ENCODE measurements at regions of chr9 and their contacts with region 1.

Region 1: GRCh38 chr9:32550562-32551433 is 1.3 kb upstream of the SMIM27 start:
- DNase-seq: peak; percentile 95 to 97
- H3K4me3 ChIP-seq: peak overlapping the region; percentile 80 to 97 (median 87)
- H3K27ac ChIP-seq: peak overlapping the region; percentile 89
- H3K4me1 ChIP-seq: peaks cover 0 to 3% (median 0%) of the 10 kb centered on the region in 4 experiments; a peak in 2 of 7 replicates
- H3K27me3 ChIP-seq: no peaks in the 10 kb centered on the region
- CTCF ChIP-seq: peak in 1 of 3 experiments; percentile 13; a peak in 1 of 4 replicates
- EP300 ChIP-seq: peak in 1 of 2 experiments; percentile 9; a peak in 1 of 3 replicates
- POLR2A ChIP-seq: peak; percentile 49 to 86
- RAD21 ChIP-seq: no peak

Region 2: GRCh38 chr9:32344551-32345182 is 206.1 kb before region 1 on chr9:
- CTCF ChIA-PET with region 1: no interaction called
- POLR2A ChIA-PET with region 1: no interaction called
- DNase-seq: peak; percentile 43 to 72
- H3K4me3 ChIP-seq: peak overlapping the region in 3 of 4 experiments; percentile 17 to 44 (median 26); a peak in 5 of 8 replicates
- H3K27ac ChIP-seq: peak overlapping the region; percentile 78; the same call in 1 of the 2 replicates
- H3K4me1 ChIP-seq: peaks cover 9 to 25% (median 16%) of the 10 kb centered on the region in 4 experiments
- H3K27me3 ChIP-seq: no peaks in the 10 kb centered on the region
- CTCF ChIP-seq: no peak
- EP300 ChIP-seq: peak in 1 of 2 experiments; percentile 79; a peak in 1 of 3 replicates
- POLR2A ChIP-seq: peak in 1 of 2 experiments; percentile 79; a peak in 2 of 3 replicates
- RAD21 ChIP-seq: 0 out of 4 replicates have a peak, but pooled peaks of 1 of the 2 experiments have one; percentile 3

Region 3: DNA sequence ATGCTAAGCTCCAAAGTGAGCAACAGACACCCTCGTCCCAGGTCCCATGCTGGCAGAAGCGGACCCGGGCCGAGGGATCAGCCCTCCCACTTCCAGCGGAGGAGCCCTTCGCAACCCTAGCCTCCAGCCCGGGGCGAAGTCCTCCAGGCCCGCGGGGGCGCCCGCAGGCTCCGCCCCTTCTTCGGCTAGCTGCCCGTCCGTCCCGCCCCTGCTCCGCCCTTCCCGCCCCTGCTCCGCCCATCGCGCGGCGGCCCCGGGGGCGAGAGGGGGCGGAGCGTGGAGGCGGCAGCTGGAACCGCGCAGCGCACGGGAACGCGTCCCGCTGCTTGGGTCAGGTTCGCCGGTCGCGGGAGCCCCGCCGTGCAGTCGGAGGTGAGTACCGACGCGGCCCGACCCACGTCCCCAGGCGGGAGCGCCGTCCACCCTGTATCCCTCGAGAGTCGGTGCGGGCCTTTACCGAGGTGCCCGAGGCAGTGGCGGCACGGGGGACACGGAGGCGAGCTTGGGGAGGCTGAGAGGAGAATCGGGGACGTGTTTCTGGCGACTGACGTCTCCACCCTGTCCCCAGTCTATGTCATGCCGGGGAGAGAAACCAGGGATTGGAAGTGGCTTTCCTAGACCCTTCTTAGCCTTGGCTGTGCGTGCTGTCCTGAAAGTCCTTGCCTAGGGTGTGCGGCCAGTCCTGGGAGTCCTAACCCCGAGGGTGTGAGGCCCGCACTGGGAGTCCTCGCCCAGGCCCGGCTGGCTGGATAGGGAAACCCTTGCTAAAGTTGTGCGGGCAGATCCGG is 166.2 kb before region 1 on chr9 and contains the start of gene ACO1:
- CTCF ChIA-PET with region 1: interaction called, 12 read pairs
- POLR2A ChIA-PET with region 1: interaction called, 14 read pairs
- DNase-seq: peak; percentile 64 to 93
- H3K4me3 ChIP-seq: peak within 1 kb of the TSS; percentile 78 to 98 (median 89)
- H3K27ac ChIP-seq: no peak within 1 kb of the TSS
- H3K4me1 ChIP-seq: peaks cover 0 to 4% (median 3%) of the 10 kb centered on the region in 4 experiments; a peak in 3 of 7 replicates
- H3K27me3 ChIP-seq: peaks cover 2 to 15% (median 8%) of the 10 kb centered on the region in 4 experiments
- CTCF ChIP-seq: peak in 1 of 3 experiments; percentile 8; a peak in 1 of 4 replicates
- EP300 ChIP-seq: no peak
- POLR2A ChIP-seq: peak in 1 of 2 experiments; percentile 56; a peak in 2 of 3 replicates
- RAD21 ChIP-seq: no peak
- total RNA-seq, gene ACO1: 45.4 and 49.8 TPM in 2 replicates

Region 4: GRCh38 chr9:32526041-32526706 is 24.6 kb before region 1 on chr9 and contains the start of gene RIGI:
- CTCF ChIA-PET with region 1: interaction called, 18 read pairs
- POLR2A ChIA-PET with region 1: interaction called, 11 read pairs
- DNase-seq: peak; percentile 47 to 80
- H3K4me3 ChIP-seq: peak within 1 kb of the TSS; percentile 67 to 90 (median 82)
- H3K27ac ChIP-seq: peak within 1 kb of the TSS; percentile 53
- H3K4me1 ChIP-seq: peaks cover 0 to 5% (median 2%) of the 10 kb centered on the region in 4 experiments; a peak in 3 of 7 replicates
- H3K27me3 ChIP-seq: no peaks in the 10 kb centered on the region
- CTCF ChIP-seq: peak in 2 of 3 experiments; percentile 36 to 59; a peak in 2 of 4 replicates
- EP300 ChIP-seq: no peak
- POLR2A ChIP-seq: peak in 1 of 2 experiments; percentile 74; a peak in 1 of 3 replicates
- RAD21 ChIP-seq: peak; percentile 45 to 59
- total RNA-seq, gene RIGI: 6.6 and 6.7 TPM in 2 replicates

Region 5: GRCh38 chr9:32533336-32533735 is 17.5 kb before region 1 on chr9:
- CTCF ChIA-PET with region 1: interaction called, 6 read pairs
- POLR2A ChIA-PET with region 1: interaction called, 16 read pairs
- DNase-seq: no peak
- H3K4me3 ChIP-seq: no peak overlapping the region
- H3K27ac ChIP-seq: no peak overlapping the region
- H3K4me1 ChIP-seq: no peaks in the 10 kb centered on the region
- H3K27me3 ChIP-seq: no peaks in the 10 kb centered on the region
- CTCF ChIP-seq: no peak
- EP300 ChIP-seq: no peak
- POLR2A ChIP-seq: no peak
- RAD21 ChIP-seq: no peak

Region 6: DNA sequence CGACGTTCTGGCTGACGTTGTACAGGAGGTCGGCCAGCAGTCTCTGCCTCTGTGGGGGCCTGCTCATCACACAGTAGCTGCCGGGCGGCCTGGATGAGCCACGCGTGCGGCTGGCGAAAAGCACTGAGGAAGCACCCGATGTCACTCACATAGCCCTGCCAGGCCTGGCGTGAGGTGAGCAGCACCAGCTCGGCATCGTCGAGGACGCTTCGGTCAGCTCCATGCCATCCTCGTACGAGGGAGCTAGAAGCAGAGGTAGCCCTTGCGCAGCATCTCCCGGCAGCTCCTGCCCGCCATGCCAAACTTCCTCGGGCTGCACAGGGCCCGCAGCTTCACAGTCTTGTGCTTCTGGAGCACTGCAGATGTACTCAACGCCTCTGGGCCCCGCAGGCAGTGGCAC is 16.0 kb after region 1 on chr9:
- CTCF ChIA-PET with region 1: interaction called, 10 read pairs
- POLR2A ChIA-PET with region 1: interaction called, 24 read pairs
- DNase-seq: no peak
- H3K4me3 ChIP-seq: no peak overlapping the region
- H3K27ac ChIP-seq: no peak overlapping the region
- H3K4me1 ChIP-seq: peaks cover 0 to 2% (median 0%) of the 10 kb centered on the region in 4 experiments; a peak in 1 of 7 replicates
- H3K27me3 ChIP-seq: no peaks in the 10 kb centered on the region
- CTCF ChIP-seq: no peak
- EP300 ChIP-seq: no peak
- POLR2A ChIP-seq: no peak
- RAD21 ChIP-seq: no peak

Region 7: DNA sequence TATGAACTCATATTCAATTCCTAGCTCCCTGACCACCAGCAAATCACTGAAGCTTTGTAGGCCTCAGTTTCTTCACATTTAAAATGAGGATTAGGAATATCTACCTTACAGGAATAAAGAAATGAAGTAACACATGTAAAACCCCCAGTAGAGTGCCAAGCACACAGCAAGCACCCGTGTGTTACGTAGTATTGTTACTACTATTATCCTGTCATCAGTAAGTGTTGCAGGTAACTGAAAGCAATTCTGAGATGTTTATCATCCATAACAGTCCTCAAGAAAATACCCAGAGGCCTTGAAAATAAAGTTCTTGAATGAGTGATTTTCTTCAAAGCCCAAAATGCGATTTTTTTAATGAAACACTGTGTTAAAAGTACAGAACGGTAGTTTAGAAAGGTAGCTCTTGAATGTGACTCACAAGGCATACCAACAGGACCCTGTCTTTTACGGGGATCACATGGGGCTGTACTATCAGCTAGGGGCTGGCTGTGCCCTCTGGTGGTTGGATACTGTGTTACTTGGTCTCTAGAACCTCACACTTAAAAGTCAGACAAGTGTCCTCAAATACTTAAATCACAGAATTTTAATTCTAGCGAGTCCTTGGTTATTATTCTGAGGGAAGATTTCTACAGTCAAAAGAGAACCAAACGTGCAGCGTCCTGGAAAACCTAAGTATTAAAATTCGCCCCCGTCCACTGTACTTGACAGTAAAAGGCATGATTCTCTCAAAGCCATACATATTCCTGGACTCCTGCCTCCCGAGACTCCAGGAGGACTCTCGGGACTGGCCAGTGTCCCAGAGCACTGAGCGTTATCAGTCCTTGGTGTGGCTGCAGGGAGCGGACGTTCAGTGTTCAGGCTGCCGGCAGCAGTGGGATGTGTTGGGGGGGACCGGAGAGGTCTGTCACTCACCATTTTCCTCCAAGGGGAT is 21.4 kb after region 1 on chr9:
- CTCF ChIA-PET with region 1: interaction called, 10 read pairs
- POLR2A ChIA-PET with region 1: interaction called, 24 read pairs
- DNase-seq: peak in 1 of 2 experiments; percentile 49
- H3K4me3 ChIP-seq: peak overlapping the region; percentile 70 to 98 (median 98)
- H3K27ac ChIP-seq: peak overlapping the region; percentile 81; the same call in 1 of the 2 replicates
- H3K4me1 ChIP-seq: peaks cover 0 to 4% (median under 1%) of the 10 kb centered on the region in 4 experiments; a peak in 2 of 7 replicates
- H3K27me3 ChIP-seq: no peaks in the 10 kb centered on the region
- CTCF ChIP-seq: peak; percentile 51 to 77 (median 71)
- EP300 ChIP-seq: no peak
- POLR2A ChIP-seq: no peak
- RAD21 ChIP-seq: peak; percentile 68 to 77

Region 8: GRCh38 chr9:32579706-32580331 is 29.0 kb after region 1 on chr9:
- CTCF ChIA-PET with region 1: interaction called, 14 read pairs
- POLR2A ChIA-PET with region 1: interaction called, 24 read pairs
- DNase-seq: peak in 1 of 2 experiments; percentile 82
- H3K4me3 ChIP-seq: no peak overlapping the region
- H3K27ac ChIP-seq: no peak overlapping the region
- H3K4me1 ChIP-seq: no peaks in the 10 kb centered on the region
- H3K27me3 ChIP-seq: no peaks in the 10 kb centered on the region
- CTCF ChIP-seq: peak; percentile 70 to 81 (median 76)
- EP300 ChIP-seq: no peak
- POLR2A ChIP-seq: no peak
- RAD21 ChIP-seq: peak; percentile 74 to 75

Region 9: DNA sequence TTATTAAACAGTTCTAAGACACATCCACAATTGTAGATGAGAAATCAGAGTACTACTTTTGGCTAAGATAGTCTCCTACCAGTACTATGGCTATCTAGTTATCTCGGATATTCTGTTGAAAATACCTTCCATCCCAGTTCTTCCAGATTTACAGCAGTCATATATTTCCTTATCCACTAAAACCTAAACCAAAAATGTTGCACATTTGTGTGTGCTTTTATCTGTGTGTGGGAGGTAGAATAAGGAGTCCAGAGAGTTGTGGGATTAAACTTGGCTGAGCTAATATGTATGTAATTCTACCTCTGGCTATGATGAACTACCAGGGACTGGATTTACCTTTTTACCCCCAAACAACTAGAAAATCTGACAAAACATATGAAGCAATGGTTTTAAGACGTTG is 39.7 kb after region 1 on chr9:
- CTCF ChIA-PET with region 1: no interaction called
- POLR2A ChIA-PET with region 1: no interaction called
- DNase-seq: no peak
- H3K4me3 ChIP-seq: no peak overlapping the region
- H3K27ac ChIP-seq: no peak overlapping the region
- H3K4me1 ChIP-seq: no peaks in the 10 kb centered on the region
- H3K27me3 ChIP-seq: no peaks in the 10 kb centered on the region
- CTCF ChIP-seq: no peak
- EP300 ChIP-seq: no peak
- POLR2A ChIP-seq: no peak
- RAD21 ChIP-seq: no peak